Transverse colon (tissue), 4 donors: ENCODE measurements at regions of chr10 and their contacts with region 1.

Region 1: GRCh38 chr10:116787893-116788665 is 45.7 kb upstream of the HSPA12A start:
- DNase-seq: peak; percentile 72
- H3K4me3 ChIP-seq: peak overlapping the region in 2 of 4 donors; percentile 7 to 25
- H3K27ac ChIP-seq: no peak overlapping the region
- H3K4me1 ChIP-seq: peaks cover 0 to 9% (median 0%) of the 10 kb centered on the region in 4 donors
- H3K27me3 ChIP-seq: no peaks in the 10 kb centered on the region
- CTCF ChIP-seq: peak; percentile 95 to 100 (median 99)
- EP300 ChIP-seq: no peak
- POLR2A ChIP-seq: no peak

Region 2: GRCh38 chr10:116683821-116684220 is 104.3 kb before region 1 on chr10:
- in situ Hi-C with region 1: loop called (anchors 5 to 10 kb)
- intact Hi-C with region 1: loop called (anchors 5 kb)
- DNase-seq: no peak
- H3K4me3 ChIP-seq: no peak overlapping the region
- H3K27ac ChIP-seq: no peak overlapping the region
- H3K4me1 ChIP-seq: peaks cover 0 to 9% (median 0%) of the 10 kb centered on the region in 4 donors
- H3K27me3 ChIP-seq: no peaks in the 10 kb centered on the region
- CTCF ChIP-seq: no peak
- EP300 ChIP-seq: no peak
- POLR2A ChIP-seq: no peak

Region 3: DNA sequence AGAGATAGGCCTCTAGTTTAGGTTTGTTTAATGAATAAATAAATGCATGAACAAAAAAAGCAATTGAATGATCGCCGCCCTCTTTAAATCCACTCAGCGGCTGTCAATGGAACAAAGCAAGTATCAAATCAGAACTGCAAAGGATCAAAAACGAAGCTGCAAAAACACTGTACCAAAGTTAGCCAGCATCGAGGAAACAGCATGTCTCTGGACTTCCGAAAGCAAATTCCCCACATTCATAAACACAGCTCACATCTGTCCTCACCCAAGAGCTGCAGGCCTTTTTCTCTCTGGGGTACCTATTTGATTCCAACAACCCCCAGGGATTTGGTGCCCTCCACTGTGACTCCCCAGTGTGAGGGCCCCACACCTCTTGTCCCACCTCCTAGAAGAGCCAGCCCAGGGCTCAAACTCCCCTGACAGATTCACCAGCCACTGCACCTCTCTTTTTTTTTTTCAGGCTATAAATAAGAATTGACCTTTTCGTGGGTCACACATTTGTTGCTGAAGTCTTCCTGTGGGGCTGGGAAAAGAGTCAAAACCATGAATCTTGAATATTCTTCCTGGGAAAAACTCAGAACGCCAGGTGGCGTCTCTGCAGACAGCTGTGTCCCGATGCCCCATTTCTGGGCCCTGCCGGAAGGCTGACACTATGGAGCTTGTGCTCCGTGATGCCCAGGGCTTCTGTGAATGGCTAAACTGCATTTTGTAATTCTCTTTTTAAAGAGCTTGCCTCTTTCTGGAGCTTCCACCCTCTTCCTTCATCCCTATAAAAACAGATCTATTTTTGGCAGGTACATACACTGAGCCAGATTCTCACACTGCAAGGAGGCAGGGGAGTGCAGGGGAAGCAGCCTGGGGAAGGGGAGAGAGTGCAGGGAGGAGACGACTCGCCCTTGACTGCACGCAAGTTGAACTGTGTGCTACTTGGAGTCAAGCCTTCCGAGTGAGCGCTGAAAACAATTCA is 97.4 kb before region 1 on chr10:
- in situ Hi-C with region 1: loop called in 3 of 4 experiments (anchors 10 kb)
- intact Hi-C with region 1: no loop called
- DNase-seq: no peak
- H3K4me3 ChIP-seq: no peak overlapping the region
- H3K27ac ChIP-seq: peak overlapping the region in 1 of 4 donors; percentile 14
- H3K4me1 ChIP-seq: peaks cover 0 to 12% (median 0%) of the 10 kb centered on the region in 4 donors
- H3K27me3 ChIP-seq: no peaks in the 10 kb centered on the region
- CTCF ChIP-seq: peak in 3 of 5 experiments; percentile 11 to 19 (median 17)
- EP300 ChIP-seq: no peak
- POLR2A ChIP-seq: no peak